Posterior cingulate gyrus (tissue), 11 donors: ENCODE measurements at regions of chr14 and their contacts with region 1.

Region 1: DNA sequence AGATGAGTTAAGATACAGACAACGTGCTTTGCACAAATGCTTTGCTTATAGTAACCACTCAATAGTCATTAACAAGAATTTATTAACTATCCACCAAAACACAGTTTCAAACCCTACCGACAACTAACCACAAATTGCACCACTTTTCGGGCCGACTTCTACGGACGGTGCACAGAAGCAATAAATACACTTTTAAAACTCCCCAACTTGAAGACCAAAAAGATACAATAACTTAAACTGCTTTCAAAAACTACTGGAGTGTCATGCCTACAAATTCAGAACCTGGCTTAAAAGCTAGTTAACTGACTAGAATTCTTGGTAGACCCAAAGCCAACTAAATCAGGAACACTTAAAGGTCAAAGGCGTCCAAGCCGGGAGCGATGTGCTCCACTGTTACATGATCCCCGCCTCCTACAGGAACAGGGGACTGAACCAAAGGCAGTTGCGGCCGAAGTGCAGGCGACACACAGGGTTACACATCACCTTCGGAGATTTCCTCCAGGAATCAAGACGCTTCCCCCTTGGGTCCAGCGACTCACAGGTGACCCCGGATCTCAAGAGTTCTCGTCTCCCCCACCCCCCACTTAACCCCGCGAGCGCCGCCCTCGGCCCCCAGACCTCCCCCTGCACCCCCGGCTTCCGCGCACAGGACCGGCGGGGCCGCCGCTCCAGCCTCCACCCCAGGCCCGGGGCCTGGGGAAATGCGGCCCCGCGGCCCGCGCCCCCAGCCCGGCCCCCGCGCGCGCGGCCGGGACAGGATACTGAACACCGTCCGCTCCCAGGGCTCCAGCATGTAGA is 507 bp downstream of the SPTSSA start:
- DNase-seq: peak in 8 of 10 donors; percentile 15 to 88 (median 26)

Region 2: DNA sequence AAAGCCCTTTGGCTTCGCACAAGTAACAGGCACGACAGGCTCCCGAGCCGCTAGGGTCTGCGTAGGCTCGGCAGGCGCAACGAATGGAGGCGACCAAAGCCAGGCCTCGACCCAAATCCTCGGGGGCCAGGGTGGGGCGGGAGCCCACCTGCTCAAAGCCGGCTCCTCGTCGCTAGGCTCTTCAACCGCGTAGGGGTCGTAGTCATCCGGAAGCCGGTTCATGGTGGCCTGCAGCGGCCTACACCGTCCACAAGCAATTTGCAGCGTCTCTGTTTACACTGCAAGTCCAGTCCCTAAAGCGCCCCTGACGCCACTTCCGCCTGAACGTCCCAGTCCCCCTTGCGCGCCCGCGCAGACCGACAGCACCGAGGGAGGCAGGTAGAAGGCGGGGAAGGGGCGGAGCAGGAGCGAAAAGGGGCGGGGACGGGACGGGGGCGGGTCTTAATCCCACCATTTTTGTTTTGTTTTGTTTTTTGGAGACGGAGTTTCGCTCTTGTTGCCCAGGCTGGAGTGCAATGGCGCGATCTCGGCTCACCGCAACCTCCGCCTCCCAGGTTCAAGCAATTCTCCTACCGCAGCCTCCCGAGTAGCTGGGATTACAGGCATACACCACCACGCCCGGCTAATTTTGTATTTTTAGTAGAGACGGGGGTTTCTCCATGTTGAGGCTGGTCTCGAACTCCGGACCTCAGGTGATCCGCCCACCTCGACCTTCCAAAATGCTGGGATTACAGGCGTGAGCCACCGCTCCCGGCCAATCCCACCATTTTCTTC is 78.1 kb after region 1 on chr14 and contains the start of gene EAPP:
- intact Hi-C with region 1: loop called (anchors 5 kb)
- DNase-seq: peak; percentile 97 to 100 (median 99)